AG04449 (cell line): ENCODE measurements at regions of chr1 and their contacts with region 1.

Region 1: GRCh38 chr1:163071405-163072255 is 2.5 kb downstream of the RGS4 start:
- DNase-seq: no peak
- H3K4me3 ChIP-seq: peak overlapping the region; percentile 62
- CTCF ChIP-seq: peak; percentile 88

Region 2: DNA sequence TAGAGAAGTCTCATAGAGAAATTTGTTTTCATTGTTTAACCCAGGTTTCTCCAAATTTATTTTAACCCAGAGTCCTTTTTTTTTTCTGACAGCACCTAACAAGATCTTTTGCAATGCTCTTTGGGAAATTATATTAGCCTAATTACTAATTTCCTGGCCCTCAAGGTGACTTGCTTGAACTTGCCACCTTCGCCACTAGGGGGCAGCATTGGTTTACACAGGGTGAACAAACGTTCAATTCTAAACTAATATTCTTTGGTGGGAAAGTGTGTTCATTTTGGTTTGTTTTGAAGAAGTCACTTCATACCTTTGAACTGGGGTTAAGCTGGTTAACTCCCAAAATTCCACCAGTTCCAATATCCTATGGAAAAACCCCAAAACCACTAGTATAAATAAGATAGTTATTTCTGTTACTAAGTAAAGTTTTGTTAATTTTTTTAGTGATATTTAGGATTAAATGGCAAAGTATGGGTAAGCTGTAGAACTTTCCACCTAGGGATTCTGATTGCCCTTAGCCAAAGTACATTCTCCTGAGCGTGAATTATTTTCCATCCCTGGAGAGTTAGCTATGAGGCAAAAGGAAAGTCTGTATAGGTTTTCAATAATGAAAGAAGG is 223.7 kb before region 1 on chr1:
- CTCF ChIA-PET with region 1: interaction called, 93 read pairs
- POLR2A ChIA-PET with region 1: no interaction called
- DNase-seq: no peak
- H3K4me3 ChIP-seq: no peak overlapping the region
- CTCF ChIP-seq: peak; percentile 83

Region 3: GRCh38 chr1:162892906-162893611 is 178.6 kb before region 1 on chr1:
- CTCF ChIA-PET with region 1: interaction called, 93 read pairs
- POLR2A ChIA-PET with region 1: no interaction called
- DNase-seq: no peak
- H3K4me3 ChIP-seq: no peak overlapping the region
- CTCF ChIP-seq: no peak

Region 4: DNA sequence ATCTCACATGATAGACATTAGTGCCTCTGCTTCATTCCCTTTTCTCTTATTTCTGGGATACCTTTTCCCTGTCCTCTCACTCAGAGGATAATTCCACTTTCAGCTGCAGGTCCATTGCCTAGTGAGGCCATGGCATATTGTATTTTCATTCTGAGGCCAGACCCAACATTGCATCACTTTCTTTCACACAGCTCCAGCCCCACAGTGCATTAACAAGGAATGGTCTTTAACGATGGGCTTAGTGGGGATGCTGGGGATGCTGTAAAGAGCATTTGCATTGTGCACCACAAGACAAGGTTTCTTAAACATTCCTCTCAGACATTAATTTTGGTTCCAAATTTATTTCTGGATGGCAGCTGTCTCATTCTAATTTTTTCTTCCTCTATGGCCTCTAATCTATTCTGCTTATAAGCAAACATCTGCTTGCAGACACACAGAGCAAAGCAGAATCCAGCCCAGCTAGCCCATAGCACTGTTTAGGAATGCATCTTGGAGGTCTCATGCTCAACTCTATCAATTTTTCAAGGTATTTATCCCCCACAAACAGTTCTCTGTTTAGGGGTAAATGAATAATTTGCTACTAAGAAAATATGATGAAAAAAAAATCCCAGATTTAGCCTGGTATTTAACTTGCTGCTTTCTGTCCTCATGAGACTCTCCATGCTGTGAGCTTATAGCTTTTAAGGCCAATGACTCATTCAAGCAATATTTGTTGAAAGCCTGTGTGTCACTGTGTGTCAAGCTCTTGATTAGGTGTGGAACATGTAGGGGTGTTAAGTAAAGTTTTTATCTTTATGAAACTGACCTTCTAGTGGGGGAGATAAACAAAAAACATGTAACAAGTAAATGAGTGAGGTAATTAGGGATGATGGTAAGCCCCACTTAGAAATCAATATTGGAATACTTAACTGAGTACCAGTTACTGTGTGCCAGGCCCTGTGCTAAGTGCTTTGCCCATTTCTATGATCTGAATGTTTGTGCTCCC is 166.2 kb before region 1 on chr1:
- CTCF ChIA-PET with region 1: interaction called, 16 read pairs
- POLR2A ChIA-PET with region 1: interaction called, 13 read pairs
- DNase-seq: peak; percentile 67
- H3K4me3 ChIP-seq: no peak overlapping the region
- CTCF ChIP-seq: no peak

Region 5: GRCh38 chr1:163106364-163106987 is 34.8 kb after region 1 on chr1:
- CTCF ChIA-PET with region 1: no interaction called
- POLR2A ChIA-PET with region 1: no interaction called
- DNase-seq: no peak
- H3K4me3 ChIP-seq: no peak overlapping the region
- CTCF ChIP-seq: no peak

Region 6: DNA sequence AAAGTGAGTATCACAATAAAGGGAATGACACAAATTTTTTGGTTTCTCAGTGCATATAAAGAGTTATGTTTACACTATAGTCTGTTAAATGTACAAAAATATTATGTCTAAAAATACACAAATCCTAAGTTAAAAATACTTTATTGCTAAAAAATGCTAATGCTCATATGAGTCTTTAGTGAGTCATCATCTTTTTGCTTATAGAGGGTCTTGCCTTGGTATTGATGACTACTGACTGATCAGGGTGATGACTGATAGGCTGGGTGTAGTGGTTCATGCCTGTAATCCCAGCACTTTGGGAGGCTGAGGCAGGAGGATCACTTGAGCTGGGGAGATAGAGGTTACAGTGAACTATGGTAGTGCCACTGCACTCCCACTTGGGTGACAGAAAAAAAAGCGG is 237.2 kb after region 1 on chr1:
- CTCF ChIA-PET with region 1: interaction called, 210 read pairs
- POLR2A ChIA-PET with region 1: no interaction called
- DNase-seq: no peak
- H3K4me3 ChIP-seq: no peak overlapping the region
- CTCF ChIP-seq: no peak

Region 7: DNA sequence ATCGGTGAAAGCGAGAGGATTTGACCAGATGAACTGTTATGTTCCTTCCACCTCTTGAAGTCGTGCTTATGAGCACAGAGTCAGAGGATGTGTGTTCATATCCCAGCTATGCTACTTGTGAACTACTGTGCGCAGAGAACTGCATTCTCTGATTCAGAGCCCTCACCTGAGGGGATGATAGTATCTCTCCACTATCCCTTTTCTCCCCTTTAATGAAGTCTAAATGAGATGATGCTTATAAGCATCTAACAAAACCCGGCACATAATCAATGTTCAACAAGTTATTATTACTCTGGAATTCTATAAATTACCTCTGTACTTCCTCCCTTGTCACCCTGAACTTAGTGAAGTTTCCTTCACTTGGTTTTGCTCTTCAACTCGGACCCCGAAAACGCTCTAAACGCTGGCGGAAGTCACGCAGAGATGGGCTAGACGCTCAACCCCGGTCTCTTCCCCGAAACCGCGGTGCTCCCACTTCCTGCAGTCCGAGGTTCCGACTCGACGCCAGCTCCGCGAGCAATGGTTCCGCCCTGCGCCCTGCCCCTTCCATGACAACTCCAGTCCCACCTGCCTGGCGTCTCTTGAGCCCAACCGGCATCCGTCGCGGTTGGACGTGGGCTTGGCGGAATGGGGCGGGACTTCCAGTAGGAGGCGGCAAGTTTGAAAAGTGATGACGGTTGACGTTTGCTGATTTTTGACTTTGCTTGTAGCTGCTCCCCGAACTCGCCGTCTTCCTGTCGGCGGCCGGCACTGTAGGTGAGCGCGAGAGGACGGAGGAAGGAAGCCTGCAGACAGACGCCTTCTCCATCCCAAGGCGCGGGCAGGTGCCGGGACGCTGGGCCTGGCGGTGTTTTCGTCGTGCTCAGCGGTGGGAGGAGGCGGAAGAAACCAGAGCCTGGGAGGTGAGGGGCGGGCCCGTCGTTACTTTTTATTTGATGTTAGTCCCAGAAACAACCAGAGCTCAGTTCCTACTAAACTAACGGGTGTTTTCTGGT is 250.0 kb after region 1 on chr1 and contains the start of gene NUF2:
- CTCF ChIA-PET with region 1: interaction called, 210 read pairs
- POLR2A ChIA-PET with region 1: interaction called, 6 read pairs
- DNase-seq: peak; percentile 96
- H3K4me3 ChIP-seq: peak within 1 kb of the TSS; percentile 87
- CTCF ChIP-seq: no peak

Region 8: DNA sequence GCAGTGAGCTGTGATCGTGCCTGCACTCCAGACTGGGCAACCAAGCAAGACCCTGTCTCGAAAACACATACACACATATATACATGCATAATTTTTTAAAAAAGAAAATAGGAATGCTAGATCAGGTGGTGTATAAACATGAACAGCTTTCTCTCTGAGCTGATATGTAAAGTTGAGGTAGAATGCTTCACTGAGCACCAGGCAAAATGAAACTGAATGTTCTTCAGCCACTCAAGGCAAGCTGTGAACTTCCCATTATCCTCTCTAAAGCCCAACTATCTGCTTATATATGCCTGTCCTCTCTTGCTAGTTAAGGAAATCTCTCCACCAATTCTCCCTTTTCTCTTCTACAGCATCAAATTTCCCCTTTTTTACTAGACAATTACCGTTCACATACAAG is 343.1 kb after region 1 on chr1:
- CTCF ChIA-PET with region 1: no interaction called
- POLR2A ChIA-PET with region 1: no interaction called
- DNase-seq: no peak
- H3K4me3 ChIP-seq: no peak overlapping the region
- CTCF ChIP-seq: no peak